ENCODE measurements at regions of chr12 and their contacts with region 1.

Region 1: GRCh38 chr12:47742253-47742825 is 16.3 kb downstream of the RAPGEF3 start:
- DNase-seq: peak; percentile 87
- H3K4me3 Mint-ChIP-seq: no peak overlapping the region
- H3K27ac Mint-ChIP-seq: no peak overlapping the region
- H3K4me1 Mint-ChIP-seq: peaks cover 19% of the 10 kb centered on the region
- H3K27me3 Mint-ChIP-seq: peaks cover 2% of the 10 kb centered on the region

Region 2: DNA sequence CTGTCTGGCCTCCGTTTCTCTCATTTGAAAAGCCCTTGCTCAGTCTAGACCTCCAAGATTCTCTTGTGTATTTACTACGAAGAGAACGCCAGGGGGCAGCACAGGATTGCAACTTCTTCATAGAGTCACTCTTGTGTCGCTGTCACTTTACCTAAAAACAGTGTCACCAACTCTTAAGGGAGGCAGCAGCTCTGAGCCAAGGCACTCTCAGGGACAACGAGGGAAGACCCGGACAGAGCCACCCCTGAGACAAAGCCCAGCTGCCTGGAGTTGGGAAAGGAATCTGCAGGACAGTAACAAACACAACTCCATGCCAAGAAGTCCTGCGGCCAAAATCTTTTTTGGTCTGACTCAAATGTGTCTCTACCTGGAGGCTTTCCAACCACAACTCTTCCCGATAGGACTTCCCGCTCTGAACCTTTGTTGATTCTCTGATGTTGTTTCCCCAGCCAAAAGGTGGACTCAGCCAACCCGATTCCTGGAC is 26.9 kb before region 1 on chr12:
- CTCF ChIA-PET with region 1: interaction called, 121 read pairs
- intact Hi-C with region 1: loop called (anchors 1 kb)
- DNase-seq: peak; percentile 90
- H3K4me3 Mint-ChIP-seq: no peak overlapping the region
- H3K27ac Mint-ChIP-seq: no peak overlapping the region
- H3K4me1 Mint-ChIP-seq: peaks cover 31% of the 10 kb centered on the region
- H3K27me3 Mint-ChIP-seq: no peaks in the 10 kb centered on the region

Region 3: GRCh38 chr12:47758834-47759690 is 16.7 kb after region 1 on chr12 and contains the start of gene RAPGEF3:
- CTCF ChIA-PET with region 1: interaction called, 287 read pairs
- intact Hi-C with region 1: loop called (anchors 2 kb)
- DNase-seq: peak; percentile 86
- H3K4me3 Mint-ChIP-seq: peak within 1 kb of the TSS; percentile 65
- H3K27ac Mint-ChIP-seq: no peak within 1 kb of the TSS
- H3K4me1 Mint-ChIP-seq: peaks cover 24% of the 10 kb centered on the region
- H3K27me3 Mint-ChIP-seq: no peaks in the 10 kb centered on the region
- total RNA-seq, gene RAPGEF3: 1.5 to 1.6 TPM

Region 4: GRCh38 chr12:47785036-47785886 is 42.9 kb after region 1 on chr12:
- CTCF ChIA-PET with region 1: interaction called, 728 read pairs
- intact Hi-C with region 1: no loop called
- DNase-seq: no peak
- H3K4me3 Mint-ChIP-seq: no peak overlapping the region
- H3K27ac Mint-ChIP-seq: peak overlapping the region; percentile 86
- H3K4me1 Mint-ChIP-seq: peaks cover 33% of the 10 kb centered on the region
- H3K27me3 Mint-ChIP-seq: no peaks in the 10 kb centered on the region

Region 5: GRCh38 chr12:47819896-47820630 is 77.7 kb after region 1 on chr12 and contains the start of gene HDAC7:
- CTCF ChIA-PET with region 1: interaction called, 14 read pairs
- intact Hi-C with region 1: no loop called
- DNase-seq: peak; percentile 82
- H3K4me3 Mint-ChIP-seq: peak within 1 kb of the TSS; percentile 95
- H3K27ac Mint-ChIP-seq: peak within 1 kb of the TSS; percentile 99
- H3K4me1 Mint-ChIP-seq: peaks cover 63% of the 10 kb centered on the region
- H3K27me3 Mint-ChIP-seq: no peaks in the 10 kb centered on the region
- total RNA-seq, gene HDAC7: 272 to 289 TPM

Region 6: DNA sequence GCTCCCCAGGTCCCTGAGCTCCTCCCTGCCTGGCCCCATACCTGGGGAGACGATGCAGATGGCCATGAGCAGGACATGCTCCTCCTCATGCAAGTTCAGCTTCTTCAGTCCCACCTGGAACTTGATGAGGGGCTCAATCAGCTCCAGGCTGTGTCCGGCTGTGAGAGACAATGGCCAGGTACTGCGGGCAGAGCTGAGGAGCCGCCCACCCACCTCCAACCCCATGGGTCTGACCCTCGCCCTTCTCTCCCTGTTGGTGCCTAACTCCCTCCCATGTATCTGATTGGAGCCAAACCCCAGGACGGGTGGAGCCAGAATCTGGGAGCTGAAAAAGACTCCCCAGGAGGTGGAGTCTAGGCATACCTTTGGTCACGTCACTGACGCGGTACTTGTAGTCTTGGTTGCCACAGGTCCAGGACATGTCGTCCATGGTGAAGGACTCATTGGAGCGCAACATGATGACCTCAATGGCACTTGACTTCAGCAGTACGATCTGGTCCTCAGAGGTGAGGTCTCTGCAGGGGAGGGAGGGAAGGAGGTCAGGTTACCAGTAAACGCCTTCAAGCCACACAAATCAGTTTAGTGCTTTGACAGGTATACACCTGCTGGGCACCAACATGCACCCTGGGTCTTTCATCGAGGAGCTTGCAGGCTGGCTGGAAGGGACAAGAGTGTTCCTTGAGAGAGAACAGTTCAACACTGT is 104.1 kb after region 1 on chr12:
- CTCF ChIA-PET with region 1: interaction called, 440 read pairs
- intact Hi-C with region 1: no loop called
- DNase-seq: no peak
- H3K4me3 Mint-ChIP-seq: no peak overlapping the region
- H3K27ac Mint-ChIP-seq: no peak overlapping the region
- H3K4me1 Mint-ChIP-seq: peaks cover 4% of the 10 kb centered on the region
- H3K27me3 Mint-ChIP-seq: no peaks in the 10 kb centered on the region

Region 7: GRCh38 chr12:47963340-47964040 is 221.2 kb after region 1 on chr12 and contains the start of gene TMEM106C:
- CTCF ChIA-PET with region 1: interaction called, 18 read pairs
- intact Hi-C with region 1: no loop called
- DNase-seq: peak; percentile 94
- H3K4me3 Mint-ChIP-seq: peak within 1 kb of the TSS; percentile 98
- H3K27ac Mint-ChIP-seq: peak within 1 kb of the TSS; percentile 79
- H3K4me1 Mint-ChIP-seq: peaks cover 30% of the 10 kb centered on the region
- H3K27me3 Mint-ChIP-seq: peaks cover 7% of the 10 kb centered on the region
- total RNA-seq, gene TMEM106C: 226 to 247 TPM